ENCODE measurements at regions of chr20 and their contacts with region 1.

Region 1: DNA sequence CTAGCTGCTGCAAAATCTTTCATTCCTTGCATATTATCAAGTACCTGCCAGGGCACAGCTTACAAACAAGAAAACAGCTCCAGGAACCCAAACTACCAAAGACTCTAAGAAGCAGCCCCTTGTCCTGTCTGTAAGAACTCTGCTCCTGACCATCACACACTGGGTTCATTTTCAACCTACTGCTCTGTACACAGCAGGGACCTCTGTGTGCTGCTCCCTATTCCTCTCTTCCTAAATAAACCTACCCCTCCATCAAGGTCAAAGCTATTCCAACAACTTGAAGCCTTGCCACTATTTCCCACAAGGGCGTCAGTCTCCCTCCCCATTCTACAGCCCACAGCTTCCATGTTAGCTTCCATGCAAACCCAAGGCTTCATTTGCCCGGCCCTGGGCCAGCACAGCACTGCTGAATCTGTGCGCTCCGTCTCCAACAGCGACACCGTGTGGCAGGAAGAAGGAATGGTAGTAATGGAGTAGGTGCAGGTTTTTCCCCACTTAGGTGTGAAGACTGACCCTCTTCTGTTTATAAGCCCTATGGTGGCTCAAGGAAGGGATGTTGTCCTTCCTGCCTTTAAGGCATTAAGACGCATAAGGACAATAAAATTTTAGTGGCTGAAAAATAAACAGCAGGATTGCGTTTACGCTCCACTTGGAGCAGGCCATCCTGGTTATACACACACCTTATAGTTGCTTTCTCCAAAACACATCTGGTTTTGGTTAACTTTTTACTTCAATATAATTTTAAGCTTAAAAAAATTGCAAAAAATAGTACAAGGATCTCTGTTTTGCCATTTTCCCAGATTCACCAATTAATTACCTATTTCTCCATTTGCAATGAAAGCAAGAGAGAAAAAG is 115.2 kb upstream of the NXT1 start:
- DNase-seq: peak; percentile 76 to 85 (median 76)
- ATAC-seq: peak; percentile 87 to 95 (median 95)
- H3K4me3 ChIP-seq: no peak overlapping the region
- H3K27ac ChIP-seq: no peak overlapping the region
- H3K4me1 ChIP-seq: peaks cover 0 to 4% (median 0%) of the 10 kb centered on the region in 12 donors
- H3K27me3 ChIP-seq: no peaks in the 10 kb centered on the region
- CTCF ChIP-seq: peak; percentile 80 to 93 (median 86)
- POLR2A ChIP-seq: no peak

Region 2: GRCh38 chr20:22333885-22334545 is 901.4 kb before region 1 on chr20:
- intact Hi-C with region 1: loop called in 1 of 10 experiments (anchors 10 kb)
- DNase-seq: peak in 3 of 5 donors; percentile 34 to 44 (median 36)
- ATAC-seq: peak in 3 of 4 donors; percentile 64 to 80 (median 66)
- H3K4me3 ChIP-seq: no peak overlapping the region
- H3K27ac ChIP-seq: no peak overlapping the region
- H3K4me1 ChIP-seq: no peaks in the 10 kb centered on the region
- H3K27me3 ChIP-seq: peaks cover 0 to 82% (median 4%) of the 10 kb centered on the region in 9 donors
- CTCF ChIP-seq: peak; percentile 54 to 79 (median 66)
- POLR2A ChIP-seq: no peak

Region 3: DNA sequence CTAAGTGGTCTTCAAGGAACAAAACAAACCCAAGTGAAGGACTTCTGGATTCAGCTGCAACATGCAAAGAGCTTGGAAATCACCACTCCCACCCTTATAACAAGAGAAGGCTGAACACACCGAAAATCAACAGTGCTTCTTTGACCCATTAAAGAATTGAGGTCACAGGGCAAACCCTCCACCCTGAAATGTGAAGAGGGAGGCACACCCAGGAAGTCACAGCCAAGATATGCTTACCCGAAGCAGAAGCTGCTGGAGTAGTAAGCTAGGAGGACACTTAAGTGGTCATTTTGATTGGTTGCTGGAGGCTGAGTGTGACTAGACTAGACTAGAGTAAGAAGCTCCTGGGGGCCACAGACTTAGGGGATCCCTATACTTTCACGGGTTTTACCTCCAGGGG is 388.5 kb before region 1 on chr20:
- intact Hi-C with region 1: loop called in 2 of 10 experiments (anchors 5 to 10 kb)
- DNase-seq: no peak
- ATAC-seq: no peak
- H3K4me3 ChIP-seq: no peak overlapping the region
- H3K27ac ChIP-seq: no peak overlapping the region
- H3K4me1 ChIP-seq: peaks cover 0 to 5% (median 0%) of the 10 kb centered on the region in 12 donors
- H3K27me3 ChIP-seq: peaks cover 0 to 7% (median 0%) of the 10 kb centered on the region in 9 donors
- CTCF ChIP-seq: no peak
- POLR2A ChIP-seq: no peak

Region 4: DNA sequence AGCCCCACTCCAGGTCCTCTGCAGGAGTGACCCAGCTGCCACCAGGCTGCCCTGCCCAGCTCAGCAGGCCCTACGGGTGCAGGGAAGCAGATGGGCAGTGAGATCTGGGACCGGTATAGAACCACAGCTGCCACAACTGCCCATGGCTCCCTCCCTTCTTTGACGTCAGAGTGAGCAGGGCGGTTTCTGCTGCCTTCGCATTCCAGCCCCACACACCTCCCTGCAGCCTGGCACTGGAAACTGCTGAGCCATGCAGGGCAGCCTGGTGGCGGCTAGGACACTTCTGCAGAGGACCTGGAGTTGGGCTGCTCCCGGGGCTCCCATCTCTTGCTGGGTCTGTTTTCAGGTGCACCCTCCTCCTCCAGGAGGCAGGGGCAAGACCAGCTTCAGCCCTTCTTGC is 47.6 kb before region 1 on chr20:
- intact Hi-C with region 1: loop called in 1 of 10 experiments (anchors 10 kb)
- DNase-seq: peak in 4 of 5 donors; percentile 46 to 75 (median 48)
- ATAC-seq: peak; percentile 75 to 95 (median 94)
- H3K4me3 ChIP-seq: no peak overlapping the region
- H3K27ac ChIP-seq: no peak overlapping the region
- H3K4me1 ChIP-seq: peaks cover 0 to 5% (median 0%) of the 10 kb centered on the region in 12 donors
- H3K27me3 ChIP-seq: no peaks in the 10 kb centered on the region
- CTCF ChIP-seq: no peak
- POLR2A ChIP-seq: no peak

Region 5: GRCh38 chr20:23200918-23201317 is 34.5 kb before region 1 on chr20:
- intact Hi-C with region 1: loop called in 1 of 10 experiments (anchors 5 kb)
- DNase-seq: peak in 3 of 5 donors; percentile 49 to 58 (median 50)
- ATAC-seq: peak in 3 of 4 donors; percentile 33 to 53 (median 42)
- H3K4me3 ChIP-seq: no peak overlapping the region
- H3K27ac ChIP-seq: no peak overlapping the region
- H3K4me1 ChIP-seq: peaks cover 9 to 52% (median 28%) of the 10 kb centered on the region in 12 donors
- H3K27me3 ChIP-seq: no peaks in the 10 kb centered on the region
- CTCF ChIP-seq: peak; percentile 10 to 58 (median 40)
- POLR2A ChIP-seq: no peak

Measured in heart left ventricle (tissue), 16 donors.